ENCODE measurements at regions of chr5 and their contacts with region 1.

Region 1: GRCh38 chr5:13957032-13957645 is 12.7 kb upstream of the DNAH5 start:
- DNase-seq: peak; percentile 78
- ATAC-seq: peak; percentile 96
- H3K4me3 ChIP-seq: no peak overlapping the region
- H3K27ac ChIP-seq: no peak overlapping the region
- H3K4me1 ChIP-seq: peaks cover 4% of the 10 kb centered on the region
- H3K27me3 ChIP-seq: no peaks in the 10 kb centered on the region
- CTCF ChIP-seq: peak; percentile 78
- POLR2A ChIP-seq: no peak
- RAD21 ChIP-seq: peak; percentile 94

Region 2: DNA sequence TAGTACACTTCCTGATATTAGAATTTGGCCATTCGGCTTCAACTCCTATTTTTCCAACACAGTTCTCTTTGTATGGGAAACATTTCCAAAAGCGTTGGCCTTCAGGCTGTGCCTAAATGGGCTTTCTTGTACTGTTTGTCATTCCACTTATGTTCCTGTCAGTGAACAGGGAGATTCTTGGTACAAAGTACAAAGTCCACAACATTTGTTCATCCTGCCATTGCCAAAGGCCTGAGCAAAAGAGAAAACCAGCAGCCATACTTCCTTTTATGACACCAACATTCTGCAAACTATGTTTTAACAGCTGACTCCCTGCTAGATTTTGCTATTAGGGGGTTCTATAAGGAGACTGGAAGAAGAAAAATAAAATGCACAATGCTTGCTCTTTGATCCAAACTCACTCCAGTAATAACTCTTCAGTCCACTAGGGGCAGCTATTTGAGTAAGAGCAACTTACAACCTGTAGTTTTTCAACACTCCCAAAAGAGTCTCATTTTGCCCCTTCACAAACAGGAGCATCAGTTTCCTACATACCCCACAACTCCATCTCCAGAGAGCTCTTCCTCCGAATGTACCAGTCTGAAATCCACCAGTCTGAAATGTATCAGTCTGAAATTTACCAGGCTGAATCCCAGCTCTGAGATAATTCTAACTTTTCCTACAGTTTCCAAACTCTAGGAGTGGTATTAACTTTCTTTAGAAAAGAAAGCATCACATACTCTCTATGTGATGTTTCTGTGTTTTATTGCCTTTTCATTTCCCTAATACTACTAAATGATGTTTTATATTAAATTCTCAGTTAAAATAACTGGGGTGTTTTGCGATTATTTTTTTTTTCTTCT is 706.5 kb before region 1 on chr5:
- CTCF ChIA-PET with region 1: no interaction called
- POLR2A ChIA-PET with region 1: no interaction called
- dilution Hi-C with region 1: no loop called
- in situ Hi-C with region 1: no loop called
- intact Hi-C with region 1: loop called (anchors 2 kb)
- DNase-seq: peak; percentile 6
- ATAC-seq: no peak
- H3K4me3 ChIP-seq: no peak overlapping the region
- H3K27ac ChIP-seq: no peak overlapping the region
- H3K4me1 ChIP-seq: no peaks in the 10 kb centered on the region
- H3K27me3 ChIP-seq: no peaks in the 10 kb centered on the region
- CTCF ChIP-seq: peak; percentile 49
- POLR2A ChIP-seq: no peak
- RAD21 ChIP-seq: peak; percentile 27; the same call in 1 of the 2 replicates

Region 3: DNA sequence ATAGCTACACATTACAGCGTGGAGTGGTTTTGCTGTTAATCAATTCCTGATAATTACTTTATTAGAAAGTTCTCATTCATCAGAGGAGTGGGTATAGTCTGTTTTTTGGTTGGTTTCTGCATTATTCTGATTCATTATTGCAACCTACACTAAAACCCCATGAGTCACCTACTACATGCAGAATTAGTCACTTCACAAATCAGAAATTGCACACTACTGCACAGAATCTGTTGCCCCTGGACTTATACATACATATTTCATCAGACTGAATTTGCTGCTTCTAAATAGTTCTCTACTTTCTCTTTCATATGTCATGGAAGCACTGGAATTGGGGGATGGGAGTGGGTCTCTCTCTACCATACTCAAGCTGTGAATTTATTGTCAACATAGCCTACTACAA is 597.8 kb before region 1 on chr5:
- CTCF ChIA-PET with region 1: no interaction called
- POLR2A ChIA-PET with region 1: no interaction called
- dilution Hi-C with region 1: no loop called
- in situ Hi-C with region 1: no loop called
- intact Hi-C with region 1: loop called (anchors 10 kb)
- DNase-seq: peak; percentile 45
- ATAC-seq: no peak
- H3K4me3 ChIP-seq: no peak overlapping the region
- H3K27ac ChIP-seq: no peak overlapping the region
- H3K4me1 ChIP-seq: no peaks in the 10 kb centered on the region
- H3K27me3 ChIP-seq: no peaks in the 10 kb centered on the region
- CTCF ChIP-seq: no peak
- POLR2A ChIP-seq: no peak
- RAD21 ChIP-seq: no peak

Region 4: DNA sequence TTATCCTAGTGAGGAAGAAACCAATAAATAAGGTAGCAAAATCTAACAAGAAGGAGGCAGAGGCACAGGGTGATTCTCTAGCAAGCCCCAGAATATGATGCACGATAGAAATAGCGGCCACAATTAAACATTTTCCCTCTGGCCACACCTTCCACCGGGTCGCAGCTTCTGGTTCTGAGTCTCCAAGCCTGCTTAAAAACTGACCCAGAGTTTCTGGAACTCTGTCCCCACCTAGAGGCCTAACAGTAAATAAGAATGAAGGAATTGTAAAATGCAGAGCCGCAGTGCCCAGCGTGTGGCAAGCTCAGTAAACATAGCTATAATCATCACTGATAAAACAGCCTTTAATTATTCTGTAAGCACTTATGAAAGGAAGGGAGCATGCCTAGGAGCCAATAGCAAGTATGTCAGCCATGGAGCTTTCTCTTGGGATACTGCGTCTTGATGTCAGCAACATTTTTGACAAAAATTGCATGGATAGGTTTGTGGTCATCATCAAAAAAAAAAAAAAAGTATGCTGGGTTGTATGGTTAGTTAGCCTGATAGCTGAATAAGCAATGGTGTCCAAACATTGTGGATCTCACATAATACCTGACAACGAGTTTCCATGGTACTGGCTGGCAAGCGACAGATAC is 478.2 kb before region 1 on chr5:
- CTCF ChIA-PET with region 1: no interaction called
- POLR2A ChIA-PET with region 1: no interaction called
- dilution Hi-C with region 1: no loop called
- in situ Hi-C with region 1: no loop called
- intact Hi-C with region 1: loop called (anchors 5 kb)
- DNase-seq: peak; percentile 46
- ATAC-seq: peak; percentile 90
- H3K4me3 ChIP-seq: no peak overlapping the region
- H3K27ac ChIP-seq: no peak overlapping the region
- H3K4me1 ChIP-seq: no peaks in the 10 kb centered on the region
- H3K27me3 ChIP-seq: peaks cover 5% of the 10 kb centered on the region
- CTCF ChIP-seq: peak; percentile 64
- POLR2A ChIP-seq: no peak
- RAD21 ChIP-seq: peak; percentile 70

Region 5: GRCh38 chr5:13660072-13660471 is 297.1 kb before region 1 on chr5:
- CTCF ChIA-PET with region 1: no interaction called
- POLR2A ChIA-PET with region 1: no interaction called
- dilution Hi-C with region 1: no loop called
- in situ Hi-C with region 1: no loop called
- intact Hi-C with region 1: loop called (anchors 5 kb)
- DNase-seq: peak; percentile 70
- ATAC-seq: no peak
- H3K4me3 ChIP-seq: no peak overlapping the region
- H3K27ac ChIP-seq: no peak overlapping the region
- H3K4me1 ChIP-seq: peaks cover 10% of the 10 kb centered on the region
- H3K27me3 ChIP-seq: no peaks in the 10 kb centered on the region
- CTCF ChIP-seq: peak; percentile 40; the same call in 1 of the 2 replicates
- POLR2A ChIP-seq: no peak
- RAD21 ChIP-seq: peak; percentile 46; the same call in 1 of the 2 replicates

Region 6: GRCh38 chr5:13831351-13831750 is 125.8 kb before region 1 on chr5:
- CTCF ChIA-PET with region 1: no interaction called
- POLR2A ChIA-PET with region 1: no interaction called
- dilution Hi-C with region 1: no loop called
- in situ Hi-C with region 1: no loop called
- intact Hi-C with region 1: loop called (anchors 2 kb)
- DNase-seq: peak; percentile 71
- ATAC-seq: peak; percentile 97
- H3K4me3 ChIP-seq: no peak overlapping the region
- H3K27ac ChIP-seq: no peak overlapping the region
- H3K4me1 ChIP-seq: peaks cover 4% of the 10 kb centered on the region
- H3K27me3 ChIP-seq: no peaks in the 10 kb centered on the region
- CTCF ChIP-seq: 0 out of 2 replicates have a peak, but pooled peaks have one; percentile 16
- POLR2A ChIP-seq: no peak
- RAD21 ChIP-seq: peak; percentile 44

Region 7: DNA sequence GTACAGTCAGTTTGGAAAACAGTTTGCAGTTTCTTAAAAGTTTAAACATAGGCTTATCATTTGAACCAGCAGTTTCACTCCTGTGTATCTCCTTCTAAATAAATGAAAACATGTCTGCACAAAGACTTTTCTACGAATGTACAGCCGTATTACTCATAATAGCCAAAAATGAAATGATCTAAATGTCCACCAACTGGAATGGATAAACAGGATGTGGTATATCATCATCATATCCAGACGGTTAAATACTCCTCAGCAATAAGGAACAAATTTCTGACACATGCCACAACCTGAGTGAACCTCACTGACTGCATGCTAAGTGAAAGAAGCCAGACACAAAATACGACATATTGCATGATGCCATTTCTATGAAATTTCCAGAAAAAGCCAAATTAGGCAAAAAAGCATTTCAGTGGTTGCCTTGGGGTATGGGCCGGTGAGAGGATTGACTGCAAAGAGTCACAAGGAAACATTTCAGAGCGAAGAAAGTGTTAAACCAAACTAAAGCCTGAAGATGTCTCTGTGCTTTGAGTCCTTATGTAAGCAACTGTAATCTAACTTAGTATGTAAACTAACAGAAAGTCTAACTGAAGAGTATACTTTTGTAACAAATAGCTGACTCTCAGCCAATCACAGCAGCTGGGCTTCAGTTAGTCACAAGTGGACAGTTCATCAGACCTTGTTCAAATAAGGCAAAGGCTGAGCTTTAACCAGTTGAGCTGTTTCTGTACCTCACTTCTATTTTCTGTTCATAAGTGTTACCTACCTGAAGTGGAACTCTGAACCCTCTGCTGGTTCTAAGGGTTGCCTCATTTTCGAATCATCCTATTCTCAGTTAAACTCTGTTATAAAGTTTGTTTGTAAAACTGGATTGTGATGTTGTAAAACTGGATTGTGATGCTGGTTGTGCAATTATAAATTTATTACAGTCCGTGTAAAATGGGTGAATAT is 251.2 kb after region 1 on chr5:
- CTCF ChIA-PET with region 1: no interaction called
- POLR2A ChIA-PET with region 1: no interaction called
- dilution Hi-C with region 1: no loop called
- in situ Hi-C with region 1: no loop called
- intact Hi-C with region 1: no loop called
- DNase-seq: peak; percentile 94
- ATAC-seq: peak; percentile 73
- H3K4me3 ChIP-seq: peak overlapping the region; percentile 4; the same call in 1 of the 2 replicates
- H3K27ac ChIP-seq: peak overlapping the region; percentile 95
- H3K4me1 ChIP-seq: peaks cover 43% of the 10 kb centered on the region
- H3K27me3 ChIP-seq: no peaks in the 10 kb centered on the region
- CTCF ChIP-seq: no peak
- POLR2A ChIP-seq: no peak; the same call in none of the 2 replicates
- RAD21 ChIP-seq: peak; percentile 7

Region 8: DNA sequence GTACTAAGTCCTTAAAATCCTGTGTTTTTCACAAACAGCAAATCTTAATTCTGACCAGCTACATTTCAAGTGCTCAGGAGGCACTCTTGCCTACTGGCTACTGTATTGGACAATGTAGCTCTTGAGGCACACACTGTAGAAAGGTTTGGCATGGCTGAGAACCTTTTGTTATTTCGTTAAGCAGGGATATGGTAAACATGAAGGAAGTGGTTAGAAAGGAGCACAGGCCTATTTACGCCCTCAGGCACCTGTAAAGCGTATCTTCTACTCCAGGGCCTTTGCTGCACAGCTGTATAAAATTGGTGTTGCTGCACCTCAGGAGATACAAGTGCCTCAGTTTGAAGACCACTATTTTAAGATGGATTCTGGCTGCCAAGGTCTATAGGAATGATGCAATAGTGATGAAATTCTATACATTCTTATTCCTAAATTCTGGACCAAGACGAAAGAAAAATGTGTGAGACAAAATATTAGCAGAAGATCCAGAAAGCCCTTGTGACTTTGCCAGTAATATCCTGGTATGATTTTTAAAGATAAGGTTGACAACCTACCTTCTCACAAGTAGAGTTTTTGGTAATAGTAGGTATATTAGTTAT is 698.1 kb after region 1 on chr5:
- CTCF ChIA-PET with region 1: no interaction called
- POLR2A ChIA-PET with region 1: no interaction called
- dilution Hi-C with region 1: no loop called
- in situ Hi-C with region 1: no loop called
- intact Hi-C with region 1: no loop called
- DNase-seq: no peak
- ATAC-seq: no peak
- H3K4me3 ChIP-seq: no peak overlapping the region
- H3K27ac ChIP-seq: no peak overlapping the region
- H3K4me1 ChIP-seq: no peaks in the 10 kb centered on the region; the same call in 1 of the 2 replicates
- H3K27me3 ChIP-seq: peaks cover 18% of the 10 kb centered on the region
- CTCF ChIP-seq: no peak
- POLR2A ChIP-seq: no peak
- RAD21 ChIP-seq: no peak